ENCODE measurements at regions of chr4 and their contacts with region 1.

Region 1: GRCh38 chr4:145557720-145558119 is 61.5 kb upstream of the MMAA start:
- DNase-seq: peak; percentile 58
- ATAC-seq: peak; percentile 98
- H3K4me3 ChIP-seq: no peak overlapping the region
- H3K27ac ChIP-seq: no peak overlapping the region
- H3K4me1 ChIP-seq: no peaks in the 10 kb centered on the region
- H3K27me3 ChIP-seq: no peaks in the 10 kb centered on the region
- CTCF ChIP-seq: peak; percentile 80
- EP300 ChIP-seq: no peak
- POLR2A ChIP-seq: no peak
- RAD21 ChIP-seq: peak; percentile 73

Region 2: GRCh38 chr4:145154573-145154972 is 403.1 kb before region 1 on chr4:
- CTCF ChIA-PET with region 1: interaction called, 6 read pairs
- POLR2A ChIA-PET with region 1: no interaction called
- in situ Hi-C with region 1: no loop called
- intact Hi-C with region 1: loop called (anchors 1 kb)
- DNase-seq: peak; percentile 31
- ATAC-seq: peak; percentile 87
- H3K4me3 ChIP-seq: no peak overlapping the region
- H3K27ac ChIP-seq: no peak overlapping the region
- H3K4me1 ChIP-seq: no peaks in the 10 kb centered on the region
- H3K27me3 ChIP-seq: no peaks in the 10 kb centered on the region
- CTCF ChIP-seq: peak; percentile 59
- EP300 ChIP-seq: no peak
- POLR2A ChIP-seq: no peak
- RAD21 ChIP-seq: no peak

Region 3: GRCh38 chr4:145216535-145216934 is 341.2 kb before region 1 on chr4:
- CTCF ChIA-PET with region 1: interaction called, 7 read pairs
- POLR2A ChIA-PET with region 1: no interaction called
- in situ Hi-C with region 1: no loop called
- intact Hi-C with region 1: loop called (anchors 1 kb)
- DNase-seq: no peak
- ATAC-seq: no peak
- H3K4me3 ChIP-seq: no peak overlapping the region
- H3K27ac ChIP-seq: no peak overlapping the region
- H3K4me1 ChIP-seq: no peaks in the 10 kb centered on the region
- H3K27me3 ChIP-seq: no peaks in the 10 kb centered on the region; a peak in 2 of 5 replicates
- CTCF ChIP-seq: peak; percentile 53
- EP300 ChIP-seq: no peak
- POLR2A ChIP-seq: no peak
- RAD21 ChIP-seq: no peak

Region 4: DNA sequence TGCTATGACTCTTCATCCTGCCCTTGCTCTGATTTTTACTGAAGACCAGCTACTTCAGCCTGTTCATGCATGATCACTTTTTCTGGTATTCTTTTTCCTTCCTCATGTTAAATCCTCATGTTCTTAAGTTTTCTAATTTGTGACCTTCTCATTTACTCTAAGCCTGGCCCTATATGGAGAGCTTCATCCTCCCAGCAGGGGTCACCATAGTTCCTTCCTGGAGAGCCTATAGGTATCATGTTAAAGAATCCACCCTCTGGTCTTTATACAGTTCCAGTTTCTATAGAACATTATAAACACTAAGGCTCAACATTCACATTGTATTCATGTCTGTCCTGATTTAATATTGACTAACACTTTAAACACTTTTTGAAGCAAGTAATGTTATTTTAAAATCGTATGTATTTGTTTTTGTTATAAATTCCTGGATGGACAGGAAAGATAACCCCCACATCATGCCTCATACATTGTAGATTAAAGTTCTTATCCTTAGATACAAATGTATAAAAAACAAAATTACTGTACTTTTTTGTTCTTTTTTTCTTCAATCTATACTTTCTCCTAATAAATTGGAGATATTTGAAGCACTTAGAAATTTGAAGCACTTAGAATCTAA is 323.5 kb before region 1 on chr4:
- CTCF ChIA-PET with region 1: interaction called, 43 read pairs
- POLR2A ChIA-PET with region 1: no interaction called
- in situ Hi-C with region 1: loop called (anchors 10 kb)
- intact Hi-C with region 1: loop called (anchors 1 kb)
- DNase-seq: peak; percentile 61
- ATAC-seq: peak; percentile 99
- H3K4me3 ChIP-seq: no peak overlapping the region
- H3K27ac ChIP-seq: no peak overlapping the region
- H3K4me1 ChIP-seq: no peaks in the 10 kb centered on the region
- H3K27me3 ChIP-seq: no peaks in the 10 kb centered on the region
- CTCF ChIP-seq: peak; percentile 79
- EP300 ChIP-seq: no peak
- POLR2A ChIP-seq: no peak
- RAD21 ChIP-seq: peak; percentile 77

Region 5: DNA sequence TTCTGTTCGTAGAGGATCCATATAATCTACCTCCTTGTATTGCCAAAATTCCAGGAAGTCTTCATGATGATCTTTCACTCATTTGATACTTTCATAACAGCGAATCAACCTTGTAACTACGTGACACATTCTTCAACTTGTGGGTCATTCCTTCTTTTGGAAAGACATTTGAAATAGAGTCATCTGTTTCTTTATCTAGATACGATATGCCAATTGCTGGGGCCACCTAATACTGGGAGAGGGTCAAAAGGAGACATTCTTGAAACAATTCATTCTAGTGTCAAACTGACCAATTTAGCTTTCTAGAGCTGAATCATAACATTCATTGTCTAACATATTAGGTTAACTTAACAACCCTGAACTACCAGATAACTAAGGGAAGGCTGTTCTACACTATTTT is 139.0 kb before region 1 on chr4:
- CTCF ChIA-PET with region 1: interaction called, 3 read pairs
- POLR2A ChIA-PET with region 1: no interaction called
- in situ Hi-C with region 1: no loop called
- intact Hi-C with region 1: loop called (anchors 10 kb)
- DNase-seq: no peak
- ATAC-seq: no peak
- H3K4me3 ChIP-seq: no peak overlapping the region
- H3K27ac ChIP-seq: no peak overlapping the region
- H3K4me1 ChIP-seq: peaks cover 9% of the 10 kb centered on the region
- H3K27me3 ChIP-seq: no peaks in the 10 kb centered on the region
- CTCF ChIP-seq: no peak
- EP300 ChIP-seq: no peak
- POLR2A ChIP-seq: no peak
- RAD21 ChIP-seq: no peak

Region 6: DNA sequence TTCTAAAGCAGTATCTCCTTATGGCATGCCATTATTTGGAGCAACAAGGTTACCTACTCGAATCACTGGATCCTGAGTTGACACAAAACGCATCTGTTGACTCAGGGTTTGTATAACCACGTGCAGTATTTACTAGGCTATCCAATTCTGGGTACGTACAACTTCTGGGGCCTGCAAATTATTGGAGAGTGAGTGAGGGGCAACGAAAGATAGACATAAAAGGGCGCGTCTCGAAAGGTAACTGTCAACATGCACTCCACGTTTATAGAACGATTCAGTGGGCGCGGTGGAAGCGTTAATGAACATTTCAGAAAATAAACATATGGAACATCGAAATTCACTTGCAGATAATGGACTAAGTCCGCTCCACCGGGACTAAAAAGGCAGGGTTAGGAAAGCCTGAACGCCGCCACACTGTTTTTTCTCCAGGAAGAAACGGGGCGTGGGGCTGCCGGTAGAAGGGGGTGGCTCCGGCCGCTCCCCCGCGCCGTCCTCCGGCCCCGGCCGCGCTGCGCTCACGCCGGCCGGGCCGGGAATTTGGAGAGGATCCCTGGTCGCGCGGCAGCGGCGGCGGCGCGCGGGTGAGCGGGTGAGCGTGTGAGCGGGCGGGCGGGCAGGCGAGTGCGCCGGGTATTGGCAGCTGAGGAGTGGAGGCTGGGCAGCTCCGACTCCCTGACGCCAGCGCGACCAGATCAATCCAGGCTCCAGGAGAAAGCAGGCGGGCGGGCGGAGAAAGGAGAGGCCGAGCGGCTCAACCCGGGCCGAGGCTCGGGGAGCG is 76.4 kb before region 1 on chr4 and contains the start of gene SMAD1:
- CTCF ChIA-PET with region 1: interaction called, 3 read pairs
- POLR2A ChIA-PET with region 1: no interaction called
- in situ Hi-C with region 1: no loop called
- intact Hi-C with region 1: loop called (anchors 2 kb)
- DNase-seq: peak; percentile 53
- ATAC-seq: peak; percentile 93
- H3K4me3 ChIP-seq: peak within 1 kb of the TSS; percentile 81 to 83 (median 82)
- H3K27ac ChIP-seq: peak within 1 kb of the TSS; percentile 89
- H3K4me1 ChIP-seq: peaks cover 36% of the 10 kb centered on the region
- H3K27me3 ChIP-seq: no peaks in the 10 kb centered on the region; a peak in 1 of 5 replicates
- CTCF ChIP-seq: no peak
- EP300 ChIP-seq: no peak
- POLR2A ChIP-seq: peak; percentile 57 to 58; a peak in 3 of 4 replicates
- RAD21 ChIP-seq: no peak; the same call in 1 of the 2 replicates
- total RNA-seq, gene SMAD1: 12.7 and 14.0 TPM in 2 replicates